WTC11 (cell line): ENCODE measurements at regions of chr5 and their contacts with region 1.

Region 1: DNA sequence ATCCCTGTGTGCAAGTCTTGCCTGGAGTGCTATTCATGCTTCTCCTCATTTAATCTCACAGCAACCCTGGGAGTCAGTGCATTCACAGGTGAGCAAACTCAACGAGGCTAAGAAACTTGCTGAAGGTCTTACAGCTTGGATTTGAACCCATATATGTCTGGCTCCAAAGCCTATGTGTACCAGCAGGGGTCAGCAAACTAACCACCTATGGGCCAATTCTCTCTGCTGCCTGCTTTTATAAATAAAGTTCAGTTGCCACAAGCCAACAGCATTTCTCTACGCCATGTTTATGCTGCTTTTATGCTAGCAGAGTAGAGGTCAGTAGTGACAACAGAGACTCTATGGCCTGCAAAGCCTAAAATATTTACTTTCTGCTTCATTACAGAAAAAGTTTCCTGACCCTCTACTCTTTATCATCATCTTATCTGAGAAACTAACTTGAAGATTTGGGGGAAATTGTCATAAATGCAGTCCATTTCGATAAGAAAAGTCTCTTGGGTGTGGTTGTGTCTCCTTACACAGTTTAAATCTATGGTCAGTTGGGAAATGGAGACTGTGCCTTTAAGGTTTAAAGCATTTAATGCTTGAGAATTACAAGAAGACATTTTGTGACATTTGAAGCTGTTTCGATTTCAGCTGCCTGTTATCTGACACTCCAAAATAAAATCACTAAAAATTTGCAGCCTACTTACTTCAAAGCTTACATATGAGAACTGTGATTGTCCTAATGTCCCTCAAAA is 137.7 kb downstream of the PRELID2 start:
- DNase-seq: peak; percentile 22
- ATAC-seq: peak; percentile 72
- H3K4me3 Mint-ChIP-seq: no peak overlapping the region
- H3K27ac Mint-ChIP-seq: no peak overlapping the region
- H3K4me1 Mint-ChIP-seq: no peaks in the 10 kb centered on the region
- H3K27me3 Mint-ChIP-seq: no peaks in the 10 kb centered on the region
- CTCF ChIP-seq: 0 out of 2 replicates have a peak, but pooled peaks have one; percentile 46

Region 2: DNA sequence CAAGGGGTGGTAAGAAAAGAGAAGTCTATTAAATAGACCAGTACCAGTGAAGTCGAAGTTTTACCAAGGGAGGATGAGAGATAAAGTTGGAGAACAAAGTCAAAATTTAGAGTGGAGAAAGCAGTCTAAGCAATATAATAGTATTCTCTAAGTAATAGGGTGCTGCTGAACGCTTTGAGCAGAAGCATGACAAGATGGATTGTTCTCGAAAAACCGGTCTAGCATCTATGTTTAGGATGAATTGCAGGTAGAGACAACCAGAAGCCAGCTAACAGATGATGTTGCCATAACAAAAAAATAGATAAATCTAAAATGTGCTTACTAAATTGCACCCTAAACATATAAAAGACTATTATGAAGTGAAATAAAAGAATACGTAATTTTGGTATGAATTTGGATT is 99.2 kb before region 1 on chr5:
- CTCF ChIA-PET with region 1: no interaction called
- POLR2A ChIA-PET with region 1: no interaction called
- DNase-seq: no peak
- ATAC-seq: no peak
- H3K4me3 Mint-ChIP-seq: no peak overlapping the region
- H3K27ac Mint-ChIP-seq: no peak overlapping the region
- H3K4me1 Mint-ChIP-seq: no peaks in the 10 kb centered on the region
- H3K27me3 Mint-ChIP-seq: no peaks in the 10 kb centered on the region
- CTCF ChIP-seq: no peak

Region 3: GRCh38 chr5:145708169-145708568 is 10.7 kb after region 1 on chr5:
- CTCF ChIA-PET with region 1: interaction called, 16 read pairs
- POLR2A ChIA-PET with region 1: no interaction called
- DNase-seq: no peak
- ATAC-seq: no peak
- H3K4me3 Mint-ChIP-seq: no peak overlapping the region
- H3K27ac Mint-ChIP-seq: no peak overlapping the region
- H3K4me1 Mint-ChIP-seq: no peaks in the 10 kb centered on the region
- H3K27me3 Mint-ChIP-seq: no peaks in the 10 kb centered on the region
- CTCF ChIP-seq: no peak

Region 4: DNA sequence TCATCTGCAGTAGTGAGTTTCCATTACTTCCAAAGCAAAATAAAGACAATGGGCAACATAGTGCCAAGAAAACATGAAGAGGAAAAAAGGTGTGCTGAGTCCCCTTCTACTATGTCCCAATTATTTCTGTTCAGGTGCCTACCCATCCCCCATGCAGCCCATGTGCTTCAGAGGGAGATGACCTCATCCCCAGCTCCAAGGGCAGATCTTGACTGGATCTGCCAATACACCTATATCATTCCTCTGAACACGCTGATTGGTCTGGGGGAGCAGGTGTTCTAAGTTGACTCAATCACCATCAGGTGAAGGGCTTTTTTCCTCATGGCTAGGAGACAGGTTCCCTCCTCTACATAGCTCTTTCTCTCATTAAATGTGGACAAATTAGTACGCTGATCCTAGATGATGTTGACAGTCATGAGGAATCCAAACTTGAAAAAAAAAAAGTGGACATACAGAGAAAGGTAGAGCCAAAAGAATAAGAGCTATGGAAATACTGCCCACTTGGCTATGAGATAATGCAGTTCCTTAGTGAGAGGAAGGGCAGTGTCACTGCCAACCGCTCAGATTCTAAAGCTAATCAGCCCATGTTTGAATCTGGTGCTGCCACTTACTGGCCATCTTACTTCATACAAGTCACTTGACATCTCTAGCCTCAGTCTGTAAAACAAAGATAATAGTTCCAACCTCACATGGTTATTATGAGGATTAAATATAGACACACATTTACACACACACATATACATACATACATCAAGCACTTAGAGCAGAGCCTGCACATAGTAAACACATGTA is 114.6 kb after region 1 on chr5:
- CTCF ChIA-PET with region 1: interaction called, 17 read pairs
- POLR2A ChIA-PET with region 1: no interaction called
- DNase-seq: no peak
- ATAC-seq: peak; percentile 94
- H3K4me3 Mint-ChIP-seq: no peak overlapping the region
- H3K27ac Mint-ChIP-seq: no peak overlapping the region; the same call in 1 of the 2 replicates
- H3K4me1 Mint-ChIP-seq: peaks cover 4% of the 10 kb centered on the region; the same call in 1 of the 2 replicates
- H3K27me3 Mint-ChIP-seq: no peaks in the 10 kb centered on the region
- CTCF ChIP-seq: no peak

Region 5: GRCh38 chr5:145825751-145826180 is 128.3 kb after region 1 on chr5:
- CTCF ChIA-PET with region 1: interaction called, 10 read pairs
- POLR2A ChIA-PET with region 1: no interaction called
- DNase-seq: no peak
- ATAC-seq: peak; percentile 76
- H3K4me3 Mint-ChIP-seq: no peak overlapping the region
- H3K27ac Mint-ChIP-seq: no peak overlapping the region
- H3K4me1 Mint-ChIP-seq: 0 out of 2 replicates have a peak, but pooled peaks cover 6% of the 10 kb centered on the region
- H3K27me3 Mint-ChIP-seq: no peaks in the 10 kb centered on the region
- CTCF ChIP-seq: no peak